GM13976 (cell line): ENCODE measurements at regions of chr12 and their contacts with region 1.

Region 1: GRCh38 chr12:45483571-45483970 is 245.9 kb upstream of the ARID2 start:
- DNase-seq: no peak
- CTCF ChIP-seq: no peak

Region 2: DNA sequence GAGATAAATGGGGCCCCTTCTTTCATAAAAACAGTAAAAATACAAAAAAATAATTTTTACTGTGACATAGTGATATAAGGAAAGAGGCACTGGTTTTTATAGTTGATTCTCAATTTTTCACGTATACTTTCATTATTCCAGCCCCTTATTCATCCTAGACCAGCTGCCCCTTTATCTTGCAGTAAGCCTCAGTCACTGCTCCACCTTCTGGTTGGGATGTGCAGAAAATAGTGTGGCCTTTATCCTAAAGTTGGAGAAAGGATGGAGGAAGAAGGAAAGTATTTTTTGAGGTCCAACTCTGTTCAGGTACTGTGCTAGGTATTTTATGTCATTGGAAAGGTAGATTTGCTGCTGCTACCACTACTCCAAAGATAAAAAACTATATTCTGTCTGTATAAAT is 95.0 kb before region 1 on chr12:
- in situ Hi-C with region 1: loop called (anchors 25 kb)
- DNase-seq: no peak
- CTCF ChIP-seq: peak; percentile 12

Region 3: GRCh38 chr12:45852508-45852907 is 368.9 kb after region 1 on chr12:
- in situ Hi-C with region 1: no loop called
- DNase-seq: no peak
- CTCF ChIP-seq: no peak